CD4-positive, alpha-beta memory T cell (primary cell): ENCODE measurements at regions of chr11 and their contacts with region 1.

Region 1: GRCh38 chr11:57324886-57325734 is at the start of gene TNKS1BP1:
- DNase-seq: peak; percentile 90 to 92 (median 91)
- H3K4me3 ChIP-seq: peak within 1 kb of the TSS; percentile 59 to 64
- H3K4me3 Mint-ChIP-seq: peak within 1 kb of the TSS; percentile 88 to 99 (median 94)
- H3K27ac ChIP-seq: peak within 1 kb of the TSS; percentile 59
- H3K27ac Mint-ChIP-seq: peak within 1 kb of the TSS; percentile 95 to 99 (median 97)
- H3K4me1 ChIP-seq: peaks cover 33% of the 10 kb centered on the region
- H3K4me1 Mint-ChIP-seq: peaks cover 28 to 62% (median 37%) of the 10 kb centered on the region in 4 donors
- H3K27me3 ChIP-seq: no peaks in the 10 kb centered on the region
- H3K27me3 Mint-ChIP-seq: no peaks in the 10 kb centered on the region
- total RNA-seq, gene TNKS1BP1: 17.2 to 23.7 TPM

Region 2: DNA sequence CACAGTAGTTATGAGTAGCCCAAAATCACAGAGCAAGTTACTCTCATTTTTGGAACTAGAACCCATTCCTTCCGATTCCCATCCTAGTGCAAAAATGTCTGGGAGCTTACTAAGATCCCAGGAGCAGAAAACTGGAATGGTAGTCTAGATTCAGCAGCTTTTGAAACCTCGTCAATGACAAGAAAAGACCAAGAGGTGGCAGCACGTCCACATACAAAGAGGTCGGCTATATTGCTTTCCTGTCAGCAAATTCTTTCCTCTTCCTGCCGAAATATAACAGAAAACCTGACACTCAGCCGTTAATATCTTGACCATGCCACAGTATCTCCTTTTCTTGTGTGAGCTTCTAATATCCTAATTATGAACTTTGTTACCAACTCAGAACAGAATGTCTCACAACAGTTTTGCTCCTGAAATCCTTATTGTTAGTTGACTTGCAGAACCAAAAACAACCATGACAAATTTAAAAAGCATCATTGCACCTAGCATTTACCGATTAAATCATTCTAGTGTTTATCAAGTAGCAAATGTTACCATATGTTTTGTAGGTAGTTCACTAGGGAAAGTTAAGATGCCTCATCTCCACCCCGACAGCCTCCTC is 483.8 kb before region 1 on chr11:
- CTCF ChIA-PET with region 1: no interaction called
- POLR2A ChIA-PET with region 1: no interaction called
- intact Hi-C with region 1: no loop called
- DNase-seq: peak in 1 of 5 donors; percentile 4
- H3K4me3 ChIP-seq: no peak overlapping the region
- H3K4me3 Mint-ChIP-seq: no peak overlapping the region
- H3K27ac ChIP-seq: no peak overlapping the region
- H3K27ac Mint-ChIP-seq: no peak overlapping the region
- H3K4me1 ChIP-seq: no peaks in the 10 kb centered on the region
- H3K4me1 Mint-ChIP-seq: peaks cover 0 to 7% (median 0%) of the 10 kb centered on the region in 4 donors
- H3K27me3 ChIP-seq: no peaks in the 10 kb centered on the region
- H3K27me3 Mint-ChIP-seq: no peaks in the 10 kb centered on the region

Region 3: DNA sequence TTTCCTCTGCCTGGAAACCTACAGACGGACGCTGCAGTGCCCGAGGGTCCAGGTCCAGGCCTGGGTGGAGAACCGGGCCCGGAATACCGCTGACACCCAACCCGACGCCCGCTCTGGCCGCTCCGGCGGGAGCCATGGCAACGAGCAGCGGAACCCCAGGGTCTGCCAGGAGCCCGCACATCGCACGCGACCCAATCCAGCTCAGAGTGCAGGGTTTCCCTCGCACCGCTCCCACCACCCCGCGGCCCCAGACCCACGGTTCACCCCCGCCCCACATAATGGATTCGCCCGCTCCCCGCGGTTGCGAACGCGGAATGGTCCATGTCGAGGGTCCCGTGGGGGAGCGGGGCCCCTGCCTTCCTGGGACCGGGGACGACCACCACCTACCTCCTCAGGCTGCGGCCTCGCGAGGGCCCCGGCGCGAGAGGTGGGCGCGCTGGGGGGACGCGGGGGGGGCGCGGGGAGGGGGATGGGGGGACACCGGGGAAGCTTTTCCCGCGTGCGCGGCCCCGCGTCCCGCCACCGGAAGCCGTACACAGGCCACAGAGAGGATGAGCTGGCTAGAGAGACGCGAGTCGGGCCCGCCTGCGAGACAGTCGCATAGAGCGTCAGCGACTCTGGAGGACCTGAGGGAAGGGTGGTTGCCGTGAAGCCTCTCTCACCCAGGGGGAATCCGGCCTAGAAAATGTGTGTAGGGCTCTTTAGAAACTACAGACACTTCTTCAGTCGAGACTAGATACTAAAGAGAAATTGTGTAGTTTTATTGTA is 10.4 kb after region 1 on chr11 and contains the start of gene SSRP1:
- CTCF ChIA-PET with region 1: interaction called, 24 read pairs
- POLR2A ChIA-PET with region 1: interaction called, 128 read pairs
- intact Hi-C with region 1: loop called (anchors 1 kb)
- DNase-seq: peak; percentile 87 to 92 (median 88)
- H3K4me3 ChIP-seq: peak within 1 kb of the TSS; percentile 55 to 87
- H3K4me3 Mint-ChIP-seq: peak within 1 kb of the TSS; percentile 86 to 98 (median 94)
- H3K27ac ChIP-seq: peak within 1 kb of the TSS; percentile 85
- H3K27ac Mint-ChIP-seq: peak within 1 kb of the TSS; percentile 96 to 99 (median 98)
- H3K4me1 ChIP-seq: peaks cover 25% of the 10 kb centered on the region
- H3K4me1 Mint-ChIP-seq: peaks cover 23 to 29% (median 25%) of the 10 kb centered on the region in 4 donors
- H3K27me3 ChIP-seq: no peaks in the 10 kb centered on the region
- H3K27me3 Mint-ChIP-seq: no peaks in the 10 kb centered on the region
- total RNA-seq, gene SSRP1: 69.0 to 74.3 TPM

Region 4: GRCh38 chr11:57426929-57427726 is 102.0 kb after region 1 on chr11 and contains the start of gene SLC43A3:
- CTCF ChIA-PET with region 1: no interaction called
- POLR2A ChIA-PET with region 1: interaction called, 8 read pairs
- intact Hi-C with region 1: loop called (anchors 5 kb)
- DNase-seq: peak; percentile 36 to 62 (median 37)
- H3K4me3 ChIP-seq: peak within 1 kb of the TSS; percentile 32 to 58
- H3K4me3 Mint-ChIP-seq: peak within 1 kb of the TSS; percentile 83 to 93 (median 88)
- H3K27ac ChIP-seq: peak within 1 kb of the TSS; percentile 45
- H3K27ac Mint-ChIP-seq: peak within 1 kb of the TSS; percentile 78 to 94 (median 90)
- H3K4me1 ChIP-seq: peaks cover 34% of the 10 kb centered on the region
- H3K4me1 Mint-ChIP-seq: peaks cover 33 to 56% (median 40%) of the 10 kb centered on the region in 4 donors
- H3K27me3 ChIP-seq: no peaks in the 10 kb centered on the region
- H3K27me3 Mint-ChIP-seq: no peaks in the 10 kb centered on the region
- total RNA-seq, gene SLC43A3: 15.1 to 15.6 TPM